ENCODE measurements at regions of chr19 and their contacts with region 1.

Region 1: DNA sequence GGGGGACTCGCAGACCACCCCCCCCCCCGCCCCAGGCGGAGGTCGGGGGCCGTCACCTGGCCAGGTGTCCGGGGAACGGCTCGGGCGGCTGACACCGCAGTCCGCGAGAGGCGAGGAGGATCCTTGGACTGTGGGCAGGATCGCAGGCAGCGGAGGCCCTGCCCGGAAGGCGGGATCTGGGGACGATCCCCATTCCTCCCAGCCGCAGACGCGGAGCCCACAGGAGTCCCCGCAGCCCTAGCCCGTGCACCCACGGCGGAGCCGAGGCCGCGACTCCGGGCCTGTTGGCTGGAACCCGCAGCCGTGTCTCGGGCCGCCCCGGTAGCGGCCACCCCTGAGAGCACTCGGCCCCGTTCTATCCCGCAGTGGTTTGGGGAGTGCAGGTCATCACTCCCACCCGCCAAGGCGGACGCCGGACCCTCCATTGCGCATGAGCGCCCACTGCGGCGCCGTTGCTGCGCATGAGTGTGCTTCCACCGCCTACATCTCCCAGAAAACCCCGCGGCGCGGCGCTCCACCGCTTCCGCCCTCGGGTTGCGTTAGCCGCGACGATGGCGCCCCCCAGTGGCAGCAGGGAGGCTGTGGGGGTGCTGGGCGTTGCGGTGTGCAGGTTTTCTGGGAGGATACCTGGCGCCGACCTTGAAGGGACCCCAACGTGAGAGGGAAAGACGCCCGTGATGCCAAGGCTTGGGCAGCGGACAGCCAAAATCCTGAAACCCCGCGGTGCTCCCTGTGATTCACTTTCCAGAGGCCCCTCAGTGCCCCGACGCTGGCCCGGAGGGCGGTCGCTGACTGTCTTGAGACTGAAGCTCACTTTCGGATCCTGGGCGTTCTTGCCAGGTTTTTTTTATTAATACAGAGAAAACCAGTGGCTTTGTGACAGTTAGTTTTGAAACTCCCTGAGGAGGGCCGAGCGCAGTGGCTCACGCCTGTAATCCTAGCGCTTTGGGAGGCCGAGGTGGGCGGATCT is 4.4 kb upstream of the ZNF329 start:
- DNase-seq: peak; percentile 81 to 88 (median 87)
- H3K4me3 ChIP-seq: peak overlapping the region; percentile 67 to 94 (median 78)
- H3K4me3 Mint-ChIP-seq: peak overlapping the region; percentile 74 to 86
- H3K27ac ChIP-seq: peak overlapping the region; percentile 28 to 53
- H3K27ac Mint-ChIP-seq: no peak overlapping the region
- H3K4me1 ChIP-seq: peaks cover 22% of the 10 kb centered on the region in 2 donors
- H3K4me1 Mint-ChIP-seq: peaks cover 9% of the 10 kb centered on the region
- H3K27me3 ChIP-seq: no peaks in the 10 kb centered on the region
- H3K27me3 Mint-ChIP-seq: peaks cover 2 to 11% (median 10%) of the 10 kb centered on the region in 3 donors
- CTCF ChIP-seq: peak; percentile 91

Region 2: GRCh38 chr19:57103573-57104277 is 1051.2 kb before region 1 on chr19:
- intact Hi-C with region 1: loop called in 1 of 2 experiments (anchors 10 kb)
- DNase-seq: peak; percentile 12 to 21 (median 13)
- H3K4me3 ChIP-seq: no peak overlapping the region
- H3K4me3 Mint-ChIP-seq: no peak overlapping the region
- H3K27ac ChIP-seq: no peak overlapping the region
- H3K27ac Mint-ChIP-seq: no peak overlapping the region
- H3K4me1 ChIP-seq: no peaks in the 10 kb centered on the region
- H3K4me1 Mint-ChIP-seq: peaks cover 5% of the 10 kb centered on the region
- H3K27me3 ChIP-seq: peaks cover 0 to 7% of the 10 kb centered on the region in 2 donors
- H3K27me3 Mint-ChIP-seq: peaks cover 11 to 29% (median 16%) of the 10 kb centered on the region in 3 donors
- CTCF ChIP-seq: peak; percentile 67

Region 3: GRCh38 chr19:57362997-57363705 is 791.8 kb before region 1 on chr19 and contains the starts of genes TRAPPC2B and ZNF547:
- intact Hi-C with region 1: loop called in 1 of 2 experiments (anchors 5 kb)
- DNase-seq: peak; percentile 97 to 100 (median 100)
- H3K4me3 ChIP-seq: peak within 1 kb of the TSS; percentile 40 to 76 (median 54)
- H3K4me3 Mint-ChIP-seq: peak within 1 kb of the TSS; percentile 81 to 86
- H3K27ac ChIP-seq: peak within 1 kb of the TSS; percentile 83 to 89
- H3K27ac Mint-ChIP-seq: peak within 1 kb of the TSS; percentile 85 to 97 (median 93)
- H3K4me1 ChIP-seq: peaks cover 12 to 14% of the 10 kb centered on the region in 2 donors
- H3K4me1 Mint-ChIP-seq: peaks cover 10% of the 10 kb centered on the region
- H3K27me3 ChIP-seq: no peaks in the 10 kb centered on the region
- H3K27me3 Mint-ChIP-seq: peaks cover 1 to 6% (median 4%) of the 10 kb centered on the region in 3 donors
- CTCF ChIP-seq: no peak
- polyA plus RNA-seq, gene TRAPPC2B: 7.4 to 13.9 (median 11.5) TPM
- polyA plus RNA-seq, gene ZNF547: 0.30 to 0.32 TPM in 2 of 3 donors, not detected in the other

Region 4: GRCh38 chr19:57410877-57411671 is 743.9 kb before region 1 on chr19 and contains the start of gene ZNF17:
- intact Hi-C with region 1: loop called in 1 of 2 experiments (anchors 10 kb)
- DNase-seq: peak; percentile 87 to 94 (median 90)
- H3K4me3 ChIP-seq: peak within 1 kb of the TSS; percentile 77 to 95 (median 91)
- H3K4me3 Mint-ChIP-seq: peak within 1 kb of the TSS; percentile 94 to 96
- H3K27ac ChIP-seq: peak within 1 kb of the TSS; percentile 10 to 81
- H3K27ac Mint-ChIP-seq: peak within 1 kb of the TSS; percentile 23 to 95 (median 78)
- H3K4me1 ChIP-seq: peaks cover 14 to 17% of the 10 kb centered on the region in 2 donors
- H3K4me1 Mint-ChIP-seq: peaks cover 14% of the 10 kb centered on the region
- H3K27me3 ChIP-seq: no peaks in the 10 kb centered on the region
- H3K27me3 Mint-ChIP-seq: peaks cover 0 to 3% (median 0%) of the 10 kb centered on the region in 3 donors
- CTCF ChIP-seq: no peak
- polyA plus RNA-seq, gene ZNF17: 1.4 to 3.3 (median 2.3) TPM

Region 5: DNA sequence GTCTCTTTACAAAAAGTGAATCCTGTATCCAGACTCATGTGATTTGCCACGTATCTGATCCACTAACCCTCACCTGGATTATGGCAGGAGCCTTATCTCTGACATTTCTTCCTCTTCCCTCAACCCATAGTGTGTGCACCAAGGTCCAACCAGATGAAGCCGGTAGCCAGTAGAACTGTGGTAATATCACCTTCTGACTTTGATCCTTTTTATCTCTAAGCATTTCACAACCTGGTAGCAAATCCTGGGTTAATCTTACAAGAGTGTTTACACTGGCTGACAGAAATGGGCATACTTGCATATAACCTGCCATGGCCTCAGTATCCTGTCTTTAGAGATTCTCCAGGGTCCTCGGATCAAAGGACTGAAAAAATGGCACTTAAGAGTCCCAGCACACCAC is 240.4 kb before region 1 on chr19:
- intact Hi-C with region 1: loop called in 1 of 2 experiments (anchors 10 kb)
- DNase-seq: no peak
- H3K4me3 ChIP-seq: no peak overlapping the region
- H3K4me3 Mint-ChIP-seq: no peak overlapping the region
- H3K27ac ChIP-seq: no peak overlapping the region
- H3K27ac Mint-ChIP-seq: peak overlapping the region in 1 of 7 donors; percentile 51
- H3K4me1 ChIP-seq: peaks cover 15 to 17% of the 10 kb centered on the region in 2 donors
- H3K4me1 Mint-ChIP-seq: peaks cover 21% of the 10 kb centered on the region
- H3K27me3 ChIP-seq: no peaks in the 10 kb centered on the region
- H3K27me3 Mint-ChIP-seq: peaks cover 0 to 4% (median 0%) of the 10 kb centered on the region in 3 donors
- CTCF ChIP-seq: no peak

Region 6: GRCh38 chr19:58002384-58003173 is 152.4 kb before region 1 on chr19 and contains the start of gene ZNF606:
- intact Hi-C with region 1: loop called (anchors 2 kb)
- DNase-seq: peak; percentile 80 to 81 (median 80)
- H3K4me3 ChIP-seq: peak within 1 kb of the TSS; percentile 42 to 91 (median 89)
- H3K4me3 Mint-ChIP-seq: peak within 1 kb of the TSS; percentile 87 to 88
- H3K27ac ChIP-seq: peak within 1 kb of the TSS; percentile 55 to 89
- H3K27ac Mint-ChIP-seq: peak within 1 kb of the TSS; percentile 70 to 92 (median 87)
- H3K4me1 ChIP-seq: peaks cover 22 to 25% of the 10 kb centered on the region in 2 donors
- H3K4me1 Mint-ChIP-seq: peaks cover 33% of the 10 kb centered on the region
- H3K27me3 ChIP-seq: no peaks in the 10 kb centered on the region
- H3K27me3 Mint-ChIP-seq: peaks cover 0 to 1% (median 1%) of the 10 kb centered on the region in 3 donors
- CTCF ChIP-seq: no peak
- polyA plus RNA-seq, gene ZNF606: 0.87 to 1.7 (median 1.2) TPM

Region 7: GRCh38 chr19:58097781-58098681 is 56.9 kb before region 1 on chr19 and contains the start of gene ZSCAN18:
- intact Hi-C with region 1: loop called in 1 of 2 experiments (anchors 2 kb)
- DNase-seq: peak; percentile 84 to 91 (median 86)
- H3K4me3 ChIP-seq: peak within 1 kb of the TSS; percentile 60 to 79 (median 68)
- H3K4me3 Mint-ChIP-seq: peak within 1 kb of the TSS; percentile 79 to 94
- H3K27ac ChIP-seq: peak within 1 kb of the TSS; percentile 84 to 90
- H3K27ac Mint-ChIP-seq: peak within 1 kb of the TSS; percentile 97 to 99 (median 98)
- H3K4me1 ChIP-seq: peaks cover 12 to 14% of the 10 kb centered on the region in 2 donors
- H3K4me1 Mint-ChIP-seq: peaks cover 10% of the 10 kb centered on the region
- H3K27me3 ChIP-seq: no peaks in the 10 kb centered on the region
- H3K27me3 Mint-ChIP-seq: peaks cover 0 to 7% (median 2%) of the 10 kb centered on the region in 3 donors
- CTCF ChIP-seq: no peak
- polyA plus RNA-seq, gene ZSCAN18: 1.1 to 4.1 (median 2.3) TPM